Naive thymus-derived CD4-positive, alpha-beta T cell (primary cell): ENCODE measurements at regions of chr7 and their contacts with region 1.

Region 1: GRCh38 chr7:105268511-105269392 is 120.0 kb downstream of the SRPK2 start:
- DNase-seq: peak in 6 of 9 donors; percentile 30 to 58 (median 46)
- ATAC-seq: peak; percentile 83
- H3K4me3 ChIP-seq: peak overlapping the region; percentile 51
- H3K4me3 Mint-ChIP-seq: peak overlapping the region; percentile 85 to 100 (median 94)
- H3K27ac ChIP-seq: peak overlapping the region; percentile 69
- H3K27ac Mint-ChIP-seq: peak overlapping the region; percentile 81 to 96 (median 91)
- H3K4me1 ChIP-seq: peaks cover 13 to 25% of the 10 kb centered on the region in 2 donors
- H3K4me1 Mint-ChIP-seq: peaks cover 34 to 84% (median 71%) of the 10 kb centered on the region in 7 donors
- H3K27me3 ChIP-seq: no peaks in the 10 kb centered on the region
- H3K27me3 Mint-ChIP-seq: no peaks in the 10 kb centered on the region

Region 2: DNA sequence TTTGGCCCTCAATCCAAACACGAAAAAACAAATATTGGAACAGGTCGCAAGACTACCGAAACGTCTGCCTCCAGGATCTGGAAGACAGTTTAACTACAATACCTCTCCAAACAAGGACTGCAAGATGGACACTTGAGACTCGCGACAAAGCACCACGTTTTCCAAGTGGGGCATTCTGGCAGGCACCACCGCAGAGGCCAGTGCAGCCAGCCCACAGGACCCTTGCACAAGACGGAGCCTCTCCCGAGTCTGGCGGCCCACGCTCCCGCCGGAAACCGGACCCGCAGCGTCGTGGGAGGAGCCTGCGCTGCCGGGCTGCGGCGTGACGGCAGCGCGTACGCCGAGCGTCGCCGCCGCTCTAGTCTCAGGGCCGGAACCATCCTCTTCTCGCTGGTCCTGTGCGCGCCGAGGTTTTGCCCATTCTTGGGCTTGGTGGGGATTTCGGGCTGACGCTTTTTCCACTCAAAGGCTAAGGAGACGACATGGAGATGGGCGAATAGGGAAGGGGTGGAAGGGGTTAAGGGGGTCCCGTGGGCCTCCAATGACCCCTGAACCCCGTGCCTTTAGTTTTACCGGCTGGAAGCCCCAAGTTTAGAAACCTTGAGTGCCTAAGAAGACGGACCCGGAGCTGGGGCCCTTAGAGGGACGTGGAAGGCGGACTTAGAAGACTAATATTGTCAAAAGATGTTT is 1060.9 kb before region 1 on chr7 and contains the start of gene ORC5:
- CTCF ChIA-PET with region 1: no interaction called
- POLR2A ChIA-PET with region 1: no interaction called
- intact Hi-C with region 1: loop called in 1 of 2 experiments (anchors 2 kb)
- DNase-seq: peak; percentile 57 to 85 (median 74)
- ATAC-seq: peak; percentile 99
- H3K4me3 ChIP-seq: peak within 1 kb of the TSS; percentile 93
- H3K4me3 Mint-ChIP-seq: peak within 1 kb of the TSS; percentile 91 to 99 (median 95)
- H3K27ac ChIP-seq: peak within 1 kb of the TSS; percentile 88
- H3K27ac Mint-ChIP-seq: peak within 1 kb of the TSS; percentile 88 to 98 (median 93)
- H3K4me1 ChIP-seq: peaks cover 15 to 17% of the 10 kb centered on the region in 2 donors
- H3K4me1 Mint-ChIP-seq: peaks cover 18 to 57% (median 38%) of the 10 kb centered on the region in 7 donors
- H3K27me3 ChIP-seq: no peaks in the 10 kb centered on the region
- H3K27me3 Mint-ChIP-seq: peaks cover 13 to 25% (median 19%) of the 10 kb centered on the region in 5 donors
- total RNA-seq, gene ORC5: 15.9 to 28.0 (median 24.5) TPM

Region 3: DNA sequence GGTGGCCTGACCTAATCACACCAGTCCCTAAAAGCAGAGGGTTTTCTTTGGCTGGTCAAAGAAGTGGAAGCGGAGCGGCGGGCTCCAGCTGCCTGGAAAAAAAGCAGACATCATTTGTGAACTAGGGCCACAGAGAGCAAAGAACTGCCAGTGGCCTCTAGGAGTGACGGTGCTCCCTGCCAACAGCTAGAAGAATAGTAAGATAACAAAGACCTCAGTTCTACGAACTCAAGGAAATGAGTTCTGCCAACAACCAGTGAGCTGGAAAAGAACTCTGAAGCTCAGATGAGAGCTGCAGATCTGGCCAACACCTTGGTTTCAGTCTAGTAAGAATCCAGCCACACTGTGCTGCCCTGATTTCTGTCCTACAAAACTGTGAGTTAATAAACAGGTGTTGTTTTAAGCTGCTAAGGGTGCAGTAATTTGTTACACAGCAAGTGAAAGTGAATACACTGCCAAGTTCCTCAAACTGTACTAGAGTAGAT is 58.0 kb before region 1 on chr7:
- CTCF ChIA-PET with region 1: no interaction called
- POLR2A ChIA-PET with region 1: interaction called, 3 read pairs
- intact Hi-C with region 1: loop called (anchors 2 to 5 kb)
- DNase-seq: peak in 2 of 9 donors; percentile 8 to 9
- ATAC-seq: peak; percentile 55
- H3K4me3 ChIP-seq: no peak overlapping the region
- H3K4me3 Mint-ChIP-seq: peak overlapping the region in 9 of 10 donors; percentile 7 to 62 (median 42)
- H3K27ac ChIP-seq: peak overlapping the region; percentile 30
- H3K27ac Mint-ChIP-seq: peak overlapping the region; percentile 43 to 87 (median 82)
- H3K4me1 ChIP-seq: peaks cover 0 to 26% of the 10 kb centered on the region in 2 donors
- H3K4me1 Mint-ChIP-seq: peaks cover 40 to 99% (median 90%) of the 10 kb centered on the region in 7 donors
- H3K27me3 ChIP-seq: no peaks in the 10 kb centered on the region
- H3K27me3 Mint-ChIP-seq: no peaks in the 10 kb centered on the region

Region 4: DNA sequence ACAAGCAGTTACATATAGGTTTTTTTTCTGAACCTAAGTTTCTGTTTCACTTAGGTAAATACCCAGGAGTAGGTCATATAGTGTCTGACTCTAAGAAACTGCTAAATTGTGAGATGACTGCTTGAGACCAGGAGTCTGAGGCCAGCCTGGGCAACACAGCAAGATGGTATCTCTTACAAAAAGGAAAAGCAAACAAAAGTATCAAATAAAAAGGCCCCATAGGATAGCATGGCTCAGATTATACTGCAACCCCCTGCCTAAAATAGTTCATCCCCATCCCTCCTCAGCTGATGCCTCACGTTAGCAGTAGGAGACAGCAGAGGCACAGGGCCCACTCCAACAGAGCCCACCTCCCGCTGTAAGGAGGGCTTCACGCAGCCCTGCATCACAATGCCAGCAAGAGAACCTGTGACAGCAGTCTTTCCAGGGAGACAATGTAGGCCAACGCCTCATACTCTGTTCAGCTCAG is 29.7 kb after region 1 on chr7:
- CTCF ChIA-PET with region 1: interaction called, 3 read pairs
- POLR2A ChIA-PET with region 1: interaction called, 5 read pairs
- intact Hi-C with region 1: loop called in 1 of 2 experiments (anchors 2 kb)
- DNase-seq: peak in 1 of 9 donors; percentile 23
- ATAC-seq: peak; percentile 42
- H3K4me3 ChIP-seq: no peak overlapping the region
- H3K4me3 Mint-ChIP-seq: peak overlapping the region in 5 of 10 donors; percentile 18 to 43 (median 26)
- H3K27ac ChIP-seq: no peak overlapping the region
- H3K27ac Mint-ChIP-seq: peak overlapping the region in 5 of 9 donors; percentile 25 to 89 (median 66)
- H3K4me1 ChIP-seq: peaks cover 4 to 13% of the 10 kb centered on the region in 2 donors
- H3K4me1 Mint-ChIP-seq: peaks cover 34 to 65% (median 52%) of the 10 kb centered on the region in 7 donors
- H3K27me3 ChIP-seq: no peaks in the 10 kb centered on the region
- H3K27me3 Mint-ChIP-seq: no peaks in the 10 kb centered on the region

Region 5: GRCh38 chr7:105319578-105319977 is 50.8 kb after region 1 on chr7:
- CTCF ChIA-PET with region 1: no interaction called
- POLR2A ChIA-PET with region 1: no interaction called
- intact Hi-C with region 1: no loop called
- DNase-seq: no peak
- ATAC-seq: no peak
- H3K4me3 ChIP-seq: no peak overlapping the region
- H3K4me3 Mint-ChIP-seq: peak overlapping the region in 6 of 10 donors; percentile 2 to 70 (median 26)
- H3K27ac ChIP-seq: no peak overlapping the region
- H3K27ac Mint-ChIP-seq: peak overlapping the region in 1 of 9 donors; percentile 11
- H3K4me1 ChIP-seq: no peaks in the 10 kb centered on the region
- H3K4me1 Mint-ChIP-seq: peaks cover 6 to 83% (median 76%) of the 10 kb centered on the region in 7 donors
- H3K27me3 ChIP-seq: no peaks in the 10 kb centered on the region
- H3K27me3 Mint-ChIP-seq: no peaks in the 10 kb centered on the region

Region 6: GRCh38 chr7:105352018-105352612 is 83.4 kb after region 1 on chr7:
- CTCF ChIA-PET with region 1: no interaction called
- POLR2A ChIA-PET with region 1: interaction called, 7 read pairs
- intact Hi-C with region 1: loop called in 1 of 2 experiments (anchors 1 kb)
- DNase-seq: peak; percentile 22 to 88 (median 82)
- ATAC-seq: peak; percentile 99
- H3K4me3 ChIP-seq: peak overlapping the region; percentile 44
- H3K4me3 Mint-ChIP-seq: peak overlapping the region; percentile 74 to 89 (median 81)
- H3K27ac ChIP-seq: peak overlapping the region; percentile 48
- H3K27ac Mint-ChIP-seq: peak overlapping the region; percentile 73 to 98 (median 92)
- H3K4me1 ChIP-seq: peaks cover 62 to 67% of the 10 kb centered on the region in 2 donors
- H3K4me1 Mint-ChIP-seq: peaks cover 45 to 82% (median 66%) of the 10 kb centered on the region in 7 donors
- H3K27me3 ChIP-seq: no peaks in the 10 kb centered on the region
- H3K27me3 Mint-ChIP-seq: no peaks in the 10 kb centered on the region

Region 7: DNA sequence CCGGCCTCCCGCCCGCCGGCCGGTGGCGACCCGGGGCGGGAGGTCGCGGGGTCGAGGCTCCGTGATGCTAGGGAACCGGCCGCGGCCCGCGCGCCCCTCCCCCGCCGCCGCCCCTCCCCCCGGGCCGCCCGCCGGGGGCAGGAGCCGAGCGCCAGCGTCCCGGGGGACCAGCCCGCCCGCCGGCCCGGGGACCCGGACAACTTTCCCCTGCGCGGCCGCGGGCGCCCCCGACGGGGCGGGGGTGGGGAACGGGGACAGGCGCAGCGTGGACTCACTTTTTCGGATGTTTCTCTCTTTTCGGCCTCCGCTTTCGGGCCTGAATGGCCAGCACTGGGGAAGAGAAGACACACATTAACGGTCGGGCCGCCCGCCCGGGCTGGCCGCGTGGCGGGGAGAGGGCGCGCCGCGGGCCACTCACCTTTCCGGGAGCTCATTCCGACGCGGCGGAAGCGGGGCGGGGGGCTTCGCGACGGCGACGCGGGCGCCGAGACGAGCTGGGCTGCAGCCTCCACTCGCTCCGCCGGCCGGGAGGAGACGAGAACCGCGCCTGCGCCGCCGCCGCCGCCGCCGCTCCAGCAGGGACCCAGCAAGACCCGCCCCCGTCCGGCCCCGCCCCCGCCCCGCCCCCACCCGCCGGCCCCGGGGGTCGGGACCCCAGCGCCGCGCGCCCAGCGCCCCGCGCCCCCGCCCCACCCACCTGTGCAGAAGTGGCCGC is 119.8 kb after region 1 on chr7 and contains the start of gene SRPK2:
- CTCF ChIA-PET with region 1: no interaction called
- POLR2A ChIA-PET with region 1: no interaction called
- intact Hi-C with region 1: loop called in 1 of 2 experiments (anchors 1 kb)
- DNase-seq: peak; percentile 61 to 79 (median 73)
- ATAC-seq: peak; percentile 86
- H3K4me3 ChIP-seq: peak within 1 kb of the TSS; percentile 77
- H3K4me3 Mint-ChIP-seq: peak within 1 kb of the TSS; percentile 91 to 100 (median 98)
- H3K27ac ChIP-seq: peak within 1 kb of the TSS; percentile 82
- H3K27ac Mint-ChIP-seq: peak within 1 kb of the TSS; percentile 90 to 99 (median 95)
- H3K4me1 ChIP-seq: peaks cover 5 to 12% of the 10 kb centered on the region in 2 donors
- H3K4me1 Mint-ChIP-seq: peaks cover 19 to 46% (median 40%) of the 10 kb centered on the region in 7 donors
- H3K27me3 ChIP-seq: no peaks in the 10 kb centered on the region
- H3K27me3 Mint-ChIP-seq: peaks cover 0 to 2% (median 0%) of the 10 kb centered on the region in 5 donors
- total RNA-seq, gene SRPK2: 45.1 to 56.7 (median 46.8) TPM

Region 8: DNA sequence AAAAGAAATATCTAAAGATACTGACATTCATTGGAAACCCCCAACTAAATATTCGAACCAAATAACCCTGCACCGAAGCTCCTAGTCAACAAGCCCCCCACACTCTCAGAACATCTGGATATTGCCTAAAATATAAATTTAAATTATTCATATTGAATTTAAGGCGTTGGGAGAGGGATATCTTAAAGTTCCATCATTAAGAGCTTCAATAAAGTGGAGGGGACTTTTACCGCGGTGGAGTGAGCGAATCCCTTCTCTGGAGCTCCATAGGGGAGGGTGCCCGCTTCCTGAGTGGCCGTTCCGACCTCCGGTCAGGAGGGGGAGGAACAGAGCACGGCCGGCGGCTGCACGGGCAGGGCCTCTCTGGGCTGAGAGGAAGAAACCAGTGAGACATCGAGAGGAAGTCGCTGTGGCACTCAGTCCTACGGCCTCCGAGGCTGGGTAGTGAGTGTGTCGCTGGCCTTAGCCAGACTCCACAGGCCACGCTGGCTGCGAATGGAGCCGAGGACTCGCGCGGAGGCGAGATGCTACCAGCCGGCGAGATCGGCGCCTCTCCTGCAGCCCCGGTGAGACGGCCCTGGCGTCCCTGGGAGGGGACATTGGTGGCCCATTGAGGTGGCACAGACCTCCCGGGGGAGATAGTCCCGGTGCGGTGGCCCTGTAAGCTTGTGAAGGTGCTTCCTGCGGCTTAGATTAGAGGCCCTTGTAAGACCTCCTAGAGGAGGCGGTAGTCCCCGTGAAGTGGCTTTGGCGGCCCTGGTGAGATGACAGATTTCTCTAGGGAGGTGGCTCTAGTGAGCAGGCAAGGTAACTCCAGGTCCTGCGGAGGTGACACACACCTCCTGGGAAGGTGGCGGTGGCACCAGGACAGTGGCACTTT is 263.3 kb after region 1 on chr7 and contains the start of gene RINT1:
- CTCF ChIA-PET with region 1: no interaction called
- POLR2A ChIA-PET with region 1: no interaction called
- intact Hi-C with region 1: loop called in 1 of 2 experiments (anchors 5 kb)
- DNase-seq: peak; percentile 72 to 90 (median 81)
- ATAC-seq: peak; percentile 97
- H3K4me3 ChIP-seq: peak within 1 kb of the TSS; percentile 86
- H3K4me3 Mint-ChIP-seq: peak within 1 kb of the TSS; percentile 87 to 99 (median 93)
- H3K27ac ChIP-seq: peak within 1 kb of the TSS; percentile 83
- H3K27ac Mint-ChIP-seq: peak within 1 kb of the TSS; percentile 87 to 98 (median 92)
- H3K4me1 ChIP-seq: peaks cover 13 to 18% of the 10 kb centered on the region in 2 donors
- H3K4me1 Mint-ChIP-seq: peaks cover 21 to 59% (median 38%) of the 10 kb centered on the region in 7 donors
- H3K27me3 ChIP-seq: no peaks in the 10 kb centered on the region
- H3K27me3 Mint-ChIP-seq: no peaks in the 10 kb centered on the region
- total RNA-seq, gene RINT1: 23.0 to 31.8 (median 26.0) TPM